AG04449 (cell line): ENCODE measurements at regions of chr9 and their contacts with region 1.

Region 1: GRCh38 chr9:18255158-18255629 is 218.8 kb upstream of the ADAMTSL1 start:
- DNase-seq: peak; percentile 41
- H3K4me3 ChIP-seq: no peak overlapping the region
- CTCF ChIP-seq: peak; percentile 83

Region 2: GRCh38 chr9:17894471-17895178 is 360.6 kb before region 1 on chr9:
- CTCF ChIA-PET with region 1: no interaction called
- POLR2A ChIA-PET with region 1: no interaction called
- DNase-seq: no peak
- H3K4me3 ChIP-seq: no peak overlapping the region
- CTCF ChIP-seq: no peak

Region 3: GRCh38 chr9:18238254-18238653 is 16.9 kb before region 1 on chr9:
- CTCF ChIA-PET with region 1: interaction called, 15 read pairs
- POLR2A ChIA-PET with region 1: no interaction called
- DNase-seq: no peak
- H3K4me3 ChIP-seq: no peak overlapping the region
- CTCF ChIP-seq: no peak

Region 4: DNA sequence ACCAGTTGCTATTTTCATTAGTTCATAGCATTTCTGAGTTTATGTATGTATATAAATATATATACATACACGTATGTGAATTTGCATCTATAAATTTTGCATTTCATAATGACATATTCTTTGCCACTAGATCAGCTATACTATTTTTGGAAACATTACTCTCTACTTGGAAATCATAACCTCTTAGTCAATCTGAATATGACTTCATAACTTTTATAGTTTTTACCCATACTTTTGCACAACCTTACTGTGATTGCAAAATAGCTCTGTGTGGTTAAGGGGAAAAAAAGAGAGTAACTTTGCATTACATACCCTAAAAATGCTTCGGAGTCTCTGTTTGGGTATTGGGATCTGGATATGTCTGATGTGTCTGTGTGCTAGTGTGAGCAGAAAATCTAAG is 173.9 kb after region 1 on chr9:
- CTCF ChIA-PET with region 1: interaction called, 10 read pairs
- POLR2A ChIA-PET with region 1: no interaction called
- DNase-seq: no peak
- H3K4me3 ChIP-seq: no peak overlapping the region
- CTCF ChIP-seq: no peak

Region 5: GRCh38 chr9:18473652-18474279 is 218.6 kb after region 1 on chr9 and contains the start of gene ADAMTSL1:
- CTCF ChIA-PET with region 1: interaction called, 49 read pairs
- POLR2A ChIA-PET with region 1: interaction called, 4 read pairs
- DNase-seq: no peak
- H3K4me3 ChIP-seq: peak within 1 kb of the TSS; percentile 84
- CTCF ChIP-seq: no peak

Region 6: GRCh38 chr9:18490635-18491370 is 235.6 kb after region 1 on chr9:
- CTCF ChIA-PET with region 1: interaction called, 14 read pairs
- POLR2A ChIA-PET with region 1: no interaction called
- DNase-seq: peak; percentile 98
- H3K4me3 ChIP-seq: peak overlapping the region; percentile 9
- CTCF ChIP-seq: no peak